Aorta (tissue), 5 donors: ENCODE measurements at regions of chr11 and their contacts with region 1.

Region 1: DNA sequence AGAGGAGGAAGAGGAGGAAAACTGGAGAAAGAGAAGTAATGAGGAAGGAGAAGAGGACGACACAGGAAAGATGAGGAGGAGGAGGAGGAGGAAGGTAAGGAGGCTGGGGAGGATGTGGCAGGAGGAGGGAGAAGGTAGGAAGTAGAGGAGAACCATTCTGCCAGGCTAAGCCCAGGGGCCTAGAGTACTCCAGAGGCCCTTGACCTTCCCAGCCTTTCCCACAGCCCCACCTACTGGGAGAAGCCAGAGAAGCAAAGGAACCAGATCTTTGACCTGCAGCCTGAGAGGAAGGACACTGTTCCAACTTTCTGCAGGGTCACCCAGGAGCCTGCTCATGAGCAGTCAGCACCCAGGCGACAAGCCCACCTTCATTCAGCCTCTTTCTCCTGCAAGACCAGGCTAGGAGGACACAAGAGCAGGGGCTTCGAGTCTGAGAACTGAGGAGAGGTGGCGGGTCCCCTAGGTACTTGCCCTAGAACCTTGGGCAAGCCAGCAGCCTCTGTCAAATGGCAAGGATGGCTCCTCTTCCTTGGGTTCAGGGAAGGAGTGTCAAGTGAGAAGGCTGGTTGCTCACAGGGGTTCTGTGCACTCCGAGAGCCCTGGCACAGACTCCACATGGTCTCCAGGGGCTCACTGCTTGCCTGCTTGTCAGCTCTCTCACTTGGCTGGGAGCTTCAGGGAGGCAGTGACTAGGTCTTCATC is 27.9 kb upstream of the OAF start:
- DNase-seq: peak in 1 of 2 donors; percentile 74
- ATAC-seq: no peak
- H3K4me3 ChIP-seq: no peak overlapping the region
- H3K27ac ChIP-seq: no peak overlapping the region
- H3K4me1 ChIP-seq: no peaks in the 10 kb centered on the region
- H3K27me3 ChIP-seq: no peaks in the 10 kb centered on the region

Region 2: DNA sequence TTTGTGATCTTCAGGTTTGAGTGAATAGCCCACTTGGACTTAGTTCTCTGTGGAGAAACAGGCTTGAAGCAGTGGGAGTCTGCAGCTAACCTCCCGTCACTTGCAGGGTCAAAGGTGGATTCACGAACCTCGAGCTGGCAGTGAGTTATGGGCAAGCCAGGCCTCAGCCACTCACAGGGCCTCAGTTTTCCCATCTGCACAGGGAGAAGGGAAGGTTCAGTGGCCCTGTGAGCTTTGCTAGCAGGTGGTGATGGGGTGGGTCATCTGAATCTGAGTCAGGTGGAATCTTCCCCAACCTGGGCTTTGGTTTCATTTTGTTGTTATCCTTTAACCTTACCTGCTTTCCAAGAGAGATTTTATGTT is 242.0 kb after region 1 on chr11:
- intact Hi-C with region 1: loop called in 1 of 2 experiments (anchors 5 kb)
- DNase-seq: no peak
- ATAC-seq: no peak
- H3K4me3 ChIP-seq: no peak overlapping the region
- H3K27ac ChIP-seq: no peak overlapping the region
- H3K4me1 ChIP-seq: no peaks in the 10 kb centered on the region
- H3K27me3 ChIP-seq: no peaks in the 10 kb centered on the region